ENCODE measurements at regions of chr3 and their contacts with region 1.

Region 1: GRCh38 chr3:44198284-44199269 is 43.1 kb upstream of the TOPAZ1 start:
- DNase-seq: peak in 1 of 2 donors; percentile 82
- H3K4me3 ChIP-seq: no peak overlapping the region
- H3K27ac ChIP-seq: no peak overlapping the region
- H3K4me1 ChIP-seq: no peaks in the 10 kb centered on the region
- H3K27me3 ChIP-seq: no peaks in the 10 kb centered on the region
- CTCF ChIP-seq: peak; percentile 67 to 79 (median 79)

Region 2: GRCh38 chr3:42961633-42962032 is 1236.9 kb before region 1 on chr3:
- intact Hi-C with region 1: loop called (anchors 5 kb)
- DNase-seq: peak in 1 of 2 donors; percentile 71
- H3K4me3 ChIP-seq: no peak overlapping the region
- H3K27ac ChIP-seq: no peak overlapping the region
- H3K4me1 ChIP-seq: no peaks in the 10 kb centered on the region
- H3K27me3 ChIP-seq: no peaks in the 10 kb centered on the region
- CTCF ChIP-seq: peak; percentile 53 to 71 (median 56)

Region 3: DNA sequence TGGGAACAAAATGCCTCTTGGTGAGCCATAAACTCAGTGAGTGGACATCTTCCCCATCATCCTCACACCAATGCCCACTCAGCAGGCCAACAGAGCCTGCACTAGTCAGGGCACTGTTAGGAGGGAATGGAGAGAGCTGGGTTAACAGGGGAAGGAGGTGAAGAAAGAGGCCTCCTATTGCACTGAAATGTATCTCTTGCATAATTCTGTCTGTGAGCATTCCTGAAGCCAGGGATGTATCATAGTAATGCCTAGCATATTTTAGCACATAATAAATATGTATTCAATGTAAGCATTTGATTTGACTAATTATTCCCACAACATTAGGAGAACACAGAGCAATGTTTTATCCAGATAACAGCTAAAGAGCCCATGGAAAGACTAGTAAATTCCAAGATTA is 658.0 kb before region 1 on chr3:
- intact Hi-C with region 1: loop called (anchors 1 kb)
- DNase-seq: no peak
- H3K4me3 ChIP-seq: no peak overlapping the region
- H3K27ac ChIP-seq: no peak overlapping the region
- H3K4me1 ChIP-seq: no peaks in the 10 kb centered on the region
- H3K27me3 ChIP-seq: no peaks in the 10 kb centered on the region
- CTCF ChIP-seq: no peak